Panc1 (cell line): ENCODE measurements at regions of chr11 and their contacts with region 1.

Region 1: DNA sequence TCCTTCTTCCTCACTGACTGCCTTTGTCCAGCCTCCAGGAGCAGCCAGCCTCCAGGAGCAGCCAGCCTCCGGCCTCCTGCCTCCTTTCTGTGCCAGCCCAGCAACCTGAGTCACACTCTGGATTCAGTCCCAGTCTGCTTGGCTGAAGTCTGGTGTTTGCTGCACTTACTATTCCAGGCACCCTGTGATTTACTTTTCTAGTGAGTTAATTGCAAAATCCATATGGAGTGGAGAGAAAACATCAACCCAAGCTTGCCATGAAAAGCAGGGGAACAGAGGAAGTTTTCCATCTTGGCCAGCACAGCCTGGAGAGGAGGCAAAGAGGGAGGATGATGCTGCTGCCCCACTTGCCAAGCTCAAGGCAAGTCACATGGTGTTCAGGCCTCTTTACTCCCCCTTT is 400.5 kb downstream of the TENM4 start:
- DNase-seq: no peak
- ATAC-seq: no peak
- H3K4me3 ChIP-seq: no peak overlapping the region
- H3K27ac ChIP-seq: no peak overlapping the region
- H3K4me1 ChIP-seq: no peaks in the 10 kb centered on the region
- H3K27me3 ChIP-seq: peaks cover 2% of the 10 kb centered on the region
- CTCF ChIP-seq: no peak

Region 2: DNA sequence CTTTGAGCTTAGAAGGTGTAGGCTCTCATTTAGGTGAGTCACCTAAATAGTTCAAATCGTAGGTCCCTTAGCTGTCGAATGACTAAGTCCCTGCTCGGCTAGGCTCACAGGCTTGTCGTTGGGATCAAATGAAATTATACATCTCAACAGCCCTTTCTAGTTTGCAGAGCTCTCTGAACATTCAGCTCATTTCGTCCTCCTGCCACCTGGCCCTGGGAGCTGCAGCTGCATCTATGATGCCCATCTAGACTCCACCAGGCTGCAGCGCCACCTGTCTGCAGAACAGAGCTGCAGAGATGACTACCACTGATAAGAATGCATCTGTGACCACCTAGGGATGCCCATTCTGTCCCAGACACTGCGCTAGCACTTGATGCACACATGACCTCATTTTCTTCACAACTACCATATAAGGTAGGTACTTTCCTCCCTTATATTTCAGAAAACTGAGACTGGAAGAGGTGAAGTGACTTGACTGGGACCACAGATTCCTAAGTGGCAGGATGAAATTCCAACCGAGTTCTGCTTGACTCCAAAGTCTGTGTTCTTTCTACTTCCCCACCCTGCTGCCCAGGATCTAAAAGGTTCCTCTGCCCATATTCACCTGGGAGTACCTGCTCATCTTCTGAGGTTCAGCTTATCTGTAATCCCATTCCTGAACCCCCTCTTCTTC is 324.6 kb before region 1 on chr11:
- CTCF ChIA-PET with region 1: interaction called, 13 read pairs
- POLR2A ChIA-PET with region 1: no interaction called
- in situ Hi-C with region 1: no loop called
- intact Hi-C with region 1: no loop called
- DNase-seq: peak; percentile 78
- ATAC-seq: peak; percentile 83
- H3K4me3 ChIP-seq: no peak overlapping the region
- H3K27ac ChIP-seq: no peak overlapping the region
- H3K4me1 ChIP-seq: peaks cover 3% of the 10 kb centered on the region; the same call in 1 of the 2 replicates
- H3K27me3 ChIP-seq: no peaks in the 10 kb centered on the region
- CTCF ChIP-seq: peak; percentile 83